ENCODE measurements at regions of chr1 and their contacts with region 1.

Region 1: DNA sequence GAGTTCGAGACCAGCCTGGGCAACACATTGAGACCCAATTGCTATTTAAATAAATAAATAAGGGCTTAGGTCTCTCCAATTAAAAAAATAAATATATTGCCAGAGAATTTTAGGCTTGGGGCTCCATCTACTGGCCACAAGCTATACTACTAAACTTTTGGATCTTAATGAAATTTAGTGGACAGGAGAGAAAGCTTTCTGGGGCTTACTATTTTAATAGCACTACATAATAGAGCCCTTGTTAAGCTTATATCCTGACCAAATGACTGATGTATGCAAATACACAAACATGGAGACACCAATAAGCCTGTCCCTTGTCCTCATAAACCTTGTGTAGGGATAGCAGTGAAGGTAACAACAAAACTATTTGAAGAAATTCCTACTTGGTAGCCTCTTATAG is 18.4 kb downstream of the CCT3 start:
- DNase-seq: no peak
- ATAC-seq: no peak
- H3K4me3 ChIP-seq: no peak overlapping the region
- H3K27ac ChIP-seq: no peak overlapping the region
- H3K4me1 ChIP-seq: no peaks in the 10 kb centered on the region
- H3K27me3 ChIP-seq: no peaks in the 10 kb centered on the region
- CTCF ChIP-seq: peak; percentile 17 to 66 (median 57)

Region 2: DNA sequence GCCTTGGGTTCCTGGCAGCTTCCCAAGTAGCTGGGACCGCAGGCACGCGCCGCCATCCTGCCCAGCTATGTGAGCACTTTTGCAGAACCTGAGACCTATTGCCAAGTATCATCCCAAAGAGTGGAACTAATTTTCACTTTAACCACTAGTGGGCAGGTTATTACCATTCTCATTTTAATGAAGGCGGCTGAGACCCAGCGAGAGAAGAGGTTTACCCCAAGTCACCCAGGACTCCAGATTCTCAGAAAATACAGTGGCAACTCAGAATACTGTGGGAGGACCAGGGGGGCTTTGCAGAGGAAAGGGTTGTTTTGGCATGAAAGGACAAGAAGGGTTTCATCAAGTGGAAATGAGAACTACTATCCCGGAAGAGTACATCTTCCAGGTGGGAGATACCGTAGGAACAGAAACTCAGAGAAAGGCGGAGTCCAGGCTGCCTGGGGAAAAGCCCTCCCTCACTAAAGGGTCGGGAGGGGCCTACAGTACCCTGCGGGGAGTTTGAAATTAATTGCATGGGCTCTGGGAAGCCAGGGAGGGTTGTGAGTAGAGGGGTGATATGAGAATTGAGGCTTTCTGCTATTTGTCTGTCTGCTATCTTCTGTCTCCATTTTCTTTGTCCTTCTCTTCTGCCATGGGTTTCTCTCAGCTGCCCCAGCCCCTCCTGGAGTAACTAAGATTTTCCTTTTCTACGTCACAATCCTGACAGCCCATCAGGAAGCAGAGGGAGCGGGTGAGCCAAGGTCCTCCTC is 173.5 kb before region 1 on chr1:
- intact Hi-C with region 1: loop called in 1 of 10 experiments (anchors 5 kb)
- DNase-seq: peak; percentile 67 to 81
- ATAC-seq: peak; percentile 18 to 67 (median 58)
- H3K4me3 ChIP-seq: peak overlapping the region in 4 of 10 donors; percentile 0 to 28 (median 9)
- H3K27ac ChIP-seq: peak overlapping the region in 3 of 10 donors; percentile 2 to 89 (median 3)
- H3K4me1 ChIP-seq: peaks cover 4 to 54% (median 20%) of the 10 kb centered on the region in 9 donors
- H3K27me3 ChIP-seq: peaks cover 0 to 19% (median 18%) of the 10 kb centered on the region in 7 donors
- CTCF ChIP-seq: peak; percentile 36 to 78 (median 71)

Region 3: GRCh38 chr1:156262461-156263287 is 57.0 kb before region 1 on chr1:
- intact Hi-C with region 1: loop called in 1 of 10 experiments (anchors 10 kb)
- DNase-seq: no peak
- ATAC-seq: peak in 1 of 8 donors; percentile 16
- H3K4me3 ChIP-seq: no peak overlapping the region
- H3K27ac ChIP-seq: no peak overlapping the region
- H3K4me1 ChIP-seq: no peaks in the 10 kb centered on the region
- H3K27me3 ChIP-seq: no peaks in the 10 kb centered on the region
- CTCF ChIP-seq: no peak